Tibial artery (tissue), 4 donors: ENCODE measurements at regions of chr6 and their contacts with region 1.

Region 1: GRCh38 chr6:2103644-2104523 is 141.5 kb downstream of the GMDS start:
- DNase-seq: peak; percentile 39 to 75
- H3K4me3 ChIP-seq: peak overlapping the region; percentile 46 to 51
- H3K27ac ChIP-seq: peak overlapping the region; percentile 60 to 85
- H3K4me1 ChIP-seq: peaks cover 0 to 31% (median 2%) of the 10 kb centered on the region in 4 donors
- H3K27me3 ChIP-seq: no peaks in the 10 kb centered on the region
- CTCF ChIP-seq: peak; percentile 54 to 67

Region 2: GRCh38 chr6:2166717-2167116 is 62.8 kb after region 1 on chr6:
- intact Hi-C with region 1: no loop called
- DNase-seq: no peak
- H3K4me3 ChIP-seq: no peak overlapping the region
- H3K27ac ChIP-seq: peak overlapping the region; percentile 21 to 45
- H3K4me1 ChIP-seq: peaks cover 0 to 66% (median 19%) of the 10 kb centered on the region in 4 donors
- H3K27me3 ChIP-seq: no peaks in the 10 kb centered on the region
- CTCF ChIP-seq: no peak

Region 3: DNA sequence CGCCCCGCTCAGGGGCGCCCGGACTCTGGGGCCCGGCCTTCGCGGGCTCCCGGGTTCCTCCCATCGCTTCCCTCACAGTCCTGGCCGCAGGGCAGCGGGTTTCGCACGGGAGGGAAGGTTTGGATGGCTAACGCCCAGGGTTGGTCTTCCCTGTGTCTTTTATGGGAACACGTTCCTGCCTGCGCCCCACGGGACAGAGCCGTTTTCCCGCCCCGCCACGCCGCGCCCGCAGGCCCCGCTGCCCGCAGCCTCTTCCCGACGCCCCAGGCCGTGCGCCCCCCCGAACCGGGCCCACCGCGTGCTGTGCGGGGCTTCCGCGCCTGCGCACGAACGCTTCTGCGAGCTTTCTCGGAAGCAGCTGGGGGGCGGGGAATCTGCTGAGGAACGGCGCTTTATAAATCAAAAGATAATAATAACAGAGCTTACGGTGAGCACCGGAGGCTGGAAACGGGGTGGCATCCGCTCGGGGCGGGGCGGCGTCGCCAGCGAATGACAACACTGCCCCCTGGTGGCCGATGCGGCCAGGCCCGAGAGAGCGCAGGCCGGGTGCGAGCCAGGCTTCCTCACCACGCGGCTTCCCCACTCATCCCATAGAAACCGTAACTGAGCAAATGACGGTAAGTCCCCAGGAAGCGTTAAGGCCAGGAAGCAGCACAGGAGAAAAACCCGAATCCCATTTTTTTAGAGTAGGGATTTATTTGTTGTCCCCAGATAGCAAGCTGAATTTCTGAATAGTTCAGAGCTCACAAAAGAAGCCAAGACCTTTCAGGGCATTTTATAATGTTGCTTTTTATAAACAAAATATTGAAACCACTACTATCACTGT is 530.5 kb after region 1 on chr6:
- intact Hi-C with region 1: loop called (anchors 10 kb)
- DNase-seq: peak; percentile 81 to 94
- H3K4me3 ChIP-seq: peak overlapping the region; percentile 53 to 70
- H3K27ac ChIP-seq: peak overlapping the region; percentile 93 to 94
- H3K4me1 ChIP-seq: peaks cover 0 to 52% (median 42%) of the 10 kb centered on the region in 4 donors
- H3K27me3 ChIP-seq: no peaks in the 10 kb centered on the region
- CTCF ChIP-seq: peak; percentile 98